ENCODE measurements at regions of chr2 and their contacts with region 1.

Region 1: GRCh38 chr2:7209757-7210555 is 292.7 kb downstream of the RNF144A start:
- DNase-seq: peak; percentile 92
- H3K4me3 ChIP-seq: no peak overlapping the region
- CTCF ChIP-seq: no peak

Region 2: DNA sequence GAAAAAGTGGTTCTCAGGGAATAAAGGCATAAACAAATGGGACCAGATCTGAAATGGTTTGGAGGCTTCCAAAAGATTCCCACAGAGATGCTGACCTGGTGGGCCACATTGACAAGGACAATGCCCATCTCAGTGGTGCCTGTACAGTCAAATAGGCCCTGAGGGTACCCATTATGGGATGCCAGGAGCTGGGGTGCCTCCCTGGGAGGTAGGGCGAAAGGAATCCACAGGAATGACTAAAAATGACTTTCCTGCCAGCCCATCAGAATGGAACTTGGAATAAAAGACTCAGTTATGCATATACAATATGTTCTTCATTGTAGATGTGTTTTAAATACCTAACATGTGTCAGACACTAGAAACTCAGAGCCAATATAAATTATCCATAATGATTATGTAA is 44.2 kb before region 1 on chr2:
- in situ Hi-C with region 1: loop called (anchors 5 kb)
- DNase-seq: no peak
- H3K4me3 ChIP-seq: no peak overlapping the region
- CTCF ChIP-seq: no peak

Region 3: DNA sequence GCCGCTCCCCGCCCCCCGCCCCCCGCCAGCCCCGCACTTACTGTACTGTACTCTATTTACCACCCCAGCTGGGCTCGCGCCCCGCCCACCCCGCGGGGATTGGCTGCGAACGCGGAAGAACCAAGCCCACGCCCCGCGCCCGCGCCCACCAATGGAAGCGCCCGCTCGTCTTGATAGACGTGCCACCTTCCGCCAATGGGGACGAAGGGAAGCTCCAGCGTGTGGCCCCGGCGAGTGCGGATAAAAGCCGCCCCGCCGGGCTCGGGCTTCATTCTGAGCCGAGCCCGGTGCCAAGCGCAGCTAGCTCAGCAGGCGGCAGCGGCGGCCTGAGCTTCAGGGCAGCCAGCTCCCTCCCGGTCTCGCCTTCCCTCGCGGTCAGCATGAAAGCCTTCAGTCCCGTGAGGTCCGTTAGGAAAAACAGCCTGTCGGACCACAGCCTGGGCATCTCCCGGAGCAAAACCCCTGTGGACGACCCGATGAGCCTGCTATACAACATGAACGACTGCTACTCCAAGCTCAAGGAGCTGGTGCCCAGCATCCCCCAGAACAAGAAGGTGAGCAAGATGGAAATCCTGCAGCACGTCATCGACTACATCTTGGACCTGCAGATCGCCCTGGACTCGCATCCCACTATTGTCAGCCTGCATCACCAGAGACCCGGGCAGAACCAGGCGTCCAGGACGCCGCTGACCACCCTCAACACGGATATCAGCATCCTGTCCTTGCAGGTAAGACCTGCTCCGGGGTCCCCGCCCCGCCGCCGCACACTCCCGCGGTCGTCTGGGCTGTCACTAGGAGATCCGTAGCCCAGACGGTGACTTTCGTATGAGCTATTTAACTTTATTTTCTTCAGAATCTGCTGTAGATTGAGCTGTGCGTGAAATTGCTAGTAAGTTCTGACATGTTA is 1472.1 kb after region 1 on chr2 and contains the start of gene ID2:
- in situ Hi-C with region 1: loop called (anchors 5 kb)
- DNase-seq: peak; percentile 98
- H3K4me3 ChIP-seq: peak within 1 kb of the TSS; percentile 76
- CTCF ChIP-seq: no peak